ENCODE measurements at regions of chr13 and their contacts with region 1.

Region 1: DNA sequence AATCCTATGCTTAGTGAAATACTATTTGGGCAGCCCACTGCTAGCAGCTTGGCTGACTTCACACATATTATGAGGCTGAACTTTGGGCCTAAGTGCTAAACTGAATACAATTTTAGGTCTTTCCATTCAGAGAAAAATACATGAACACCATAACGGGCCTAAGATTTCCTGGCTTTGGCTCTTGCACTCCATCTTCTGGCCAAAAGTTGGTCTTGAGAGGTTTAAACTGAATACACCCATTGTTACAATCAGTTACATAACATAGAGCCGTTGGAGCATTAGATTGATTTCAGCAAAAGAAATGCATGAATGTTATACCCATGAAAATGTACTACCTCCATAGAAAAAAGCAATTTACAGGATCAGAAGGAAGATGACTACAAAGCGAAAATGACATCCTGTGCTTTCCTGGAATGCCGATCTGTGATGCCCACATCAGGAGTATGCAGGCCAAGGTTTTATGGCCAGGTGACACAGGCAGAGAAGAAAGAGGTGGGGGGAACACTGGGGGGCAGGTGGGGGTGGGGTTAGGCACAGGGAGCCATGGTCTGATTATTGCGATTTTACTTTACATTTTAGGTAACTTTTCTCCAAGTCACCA is 11.1 kb upstream of the SHISA2 start:
- DNase-seq: no peak
- H3K4me3 Mint-ChIP-seq: no peak overlapping the region
- H3K27ac Mint-ChIP-seq: no peak overlapping the region
- H3K4me1 Mint-ChIP-seq: peaks cover 6% of the 10 kb centered on the region
- H3K27me3 Mint-ChIP-seq: peaks cover 24% of the 10 kb centered on the region

Region 2: GRCh38 chr13:24407844-24408243 is 1655.1 kb before region 1 on chr13:
- intact Hi-C with region 1: no loop called
- DNase-seq: no peak
- H3K4me3 Mint-ChIP-seq: no peak overlapping the region
- H3K27ac Mint-ChIP-seq: no peak overlapping the region
- H3K4me1 Mint-ChIP-seq: peaks cover 5% of the 10 kb centered on the region
- H3K27me3 Mint-ChIP-seq: peaks cover 47% of the 10 kb centered on the region

Region 3: GRCh38 chr13:25574437-25575411 is 488.2 kb before region 1 on chr13:
- intact Hi-C with region 1: loop called (anchors 2 kb)
- DNase-seq: peak; percentile 59
- H3K4me3 Mint-ChIP-seq: no peak overlapping the region
- H3K27ac Mint-ChIP-seq: no peak overlapping the region
- H3K4me1 Mint-ChIP-seq: peaks cover 5% of the 10 kb centered on the region
- H3K27me3 Mint-ChIP-seq: peaks cover 32% of the 10 kb centered on the region

Region 4: DNA sequence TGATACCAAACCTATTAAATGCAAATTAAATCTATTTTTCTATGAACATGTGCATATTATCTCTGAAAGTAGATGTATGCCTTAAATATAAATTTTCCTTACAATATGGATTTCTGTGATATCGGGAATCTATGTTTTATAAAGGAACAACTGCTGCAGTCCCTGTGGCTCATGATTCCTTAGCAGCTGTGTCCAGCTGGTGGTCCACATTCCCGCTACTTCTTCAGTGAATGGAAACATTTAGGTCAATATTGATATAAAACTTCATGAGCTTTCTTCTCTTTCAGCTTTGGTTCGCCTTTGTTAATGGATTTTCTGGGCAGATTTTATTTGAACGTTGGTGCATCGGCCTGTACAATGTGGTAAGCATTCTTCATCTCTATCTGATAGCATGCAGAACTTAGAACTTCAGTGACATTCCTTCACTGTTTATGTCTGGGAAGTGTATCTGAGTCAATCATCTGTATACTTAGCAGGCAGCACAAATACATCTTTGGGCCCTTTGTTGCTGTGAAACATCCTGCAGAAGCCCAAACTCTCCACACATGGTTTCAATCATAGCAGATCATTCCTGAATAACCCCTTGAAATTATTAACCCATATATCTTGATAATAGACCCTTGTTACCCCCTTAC is 235.0 kb before region 1 on chr13:
- intact Hi-C with region 1: loop called (anchors 5 kb)
- DNase-seq: no peak
- H3K4me3 Mint-ChIP-seq: no peak overlapping the region
- H3K27ac Mint-ChIP-seq: no peak overlapping the region
- H3K4me1 Mint-ChIP-seq: no peaks in the 10 kb centered on the region
- H3K27me3 Mint-ChIP-seq: peaks cover 12% of the 10 kb centered on the region

Region 5: GRCh38 chr13:25992076-25992475 is 70.9 kb before region 1 on chr13:
- intact Hi-C with region 1: no loop called
- DNase-seq: no peak
- H3K4me3 Mint-ChIP-seq: no peak overlapping the region
- H3K27ac Mint-ChIP-seq: no peak overlapping the region
- H3K4me1 Mint-ChIP-seq: no peaks in the 10 kb centered on the region
- H3K27me3 Mint-ChIP-seq: peaks cover 13% of the 10 kb centered on the region

Measured in activated T-helper 2 cell treated with anti-CD3 and anti-CD28 coated beads, Interferon-gamma antibody, Interleukin-2, Interleukin-4, amounts not matched to agents 10 μg/mL and 5 μg/mL and 100 μg/mL, durations not matched to agents 14 hours and 24 hours and 36 hours (primary cell).